CD8-positive, alpha-beta memory T cell (primary cell): ENCODE measurements at regions of chr1 and their contacts with region 1.

Region 1: DNA sequence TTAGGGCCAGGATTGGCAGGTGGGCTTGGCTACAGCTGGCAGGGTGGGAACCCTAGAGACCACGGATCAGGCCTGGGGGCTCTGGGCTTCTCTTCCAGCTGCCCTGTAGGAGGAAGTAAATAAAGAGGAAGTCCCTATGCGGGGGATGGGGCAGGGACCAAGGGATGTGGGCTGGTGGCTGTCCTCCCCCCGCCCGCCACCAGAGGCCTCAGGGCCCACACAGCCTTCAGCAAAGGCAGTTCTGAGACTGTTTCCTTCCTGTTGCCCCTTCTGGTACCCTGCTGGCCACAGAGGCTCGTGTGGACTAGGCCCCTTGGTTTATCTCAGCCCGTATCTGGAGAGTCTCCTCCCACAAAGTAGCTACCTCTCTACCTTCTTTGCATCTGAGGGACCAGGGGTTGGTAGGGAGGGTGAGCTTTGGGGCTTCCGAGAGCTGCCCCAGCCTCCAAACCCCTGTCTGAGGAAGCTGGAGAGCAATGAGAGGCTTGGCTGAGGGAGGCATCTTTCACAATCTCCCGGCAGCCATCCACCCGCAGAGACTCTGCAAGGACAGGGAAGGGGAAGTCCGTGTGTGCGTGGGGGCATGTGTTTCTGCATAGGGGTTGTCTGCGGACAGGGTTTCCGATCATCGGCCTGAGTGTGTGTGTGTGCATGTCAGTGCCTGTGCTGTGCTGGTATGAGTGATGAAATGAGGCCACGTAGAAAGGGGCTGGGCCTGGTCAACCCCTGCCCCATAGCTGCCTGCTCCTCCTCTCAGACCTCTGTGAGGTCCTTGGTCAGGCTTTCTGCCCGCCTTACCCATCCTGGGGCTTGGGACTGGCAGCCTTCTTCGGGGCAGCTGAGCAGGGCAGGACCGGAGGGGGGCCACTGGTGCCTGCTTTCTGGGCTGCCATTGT is 12.5 kb downstream of the RPS6KA1 start:
- DNase-seq: peak; percentile 57 to 85 (median 73)
- H3K4me3 ChIP-seq: peak overlapping the region; percentile 61
- H3K4me3 Mint-ChIP-seq: peak overlapping the region; percentile 60 to 84 (median 81)
- H3K27ac ChIP-seq: peak overlapping the region; percentile 80
- H3K27ac Mint-ChIP-seq: peak overlapping the region; percentile 94 to 98 (median 97)
- H3K4me1 ChIP-seq: peaks cover 88% of the 10 kb centered on the region
- H3K4me1 Mint-ChIP-seq: peaks cover 79 to 92% (median 87%) of the 10 kb centered on the region in 3 donors
- H3K27me3 ChIP-seq: no peaks in the 10 kb centered on the region
- H3K27me3 Mint-ChIP-seq: peaks cover 0 to 1% of the 10 kb centered on the region in 2 donors

Region 2: DNA sequence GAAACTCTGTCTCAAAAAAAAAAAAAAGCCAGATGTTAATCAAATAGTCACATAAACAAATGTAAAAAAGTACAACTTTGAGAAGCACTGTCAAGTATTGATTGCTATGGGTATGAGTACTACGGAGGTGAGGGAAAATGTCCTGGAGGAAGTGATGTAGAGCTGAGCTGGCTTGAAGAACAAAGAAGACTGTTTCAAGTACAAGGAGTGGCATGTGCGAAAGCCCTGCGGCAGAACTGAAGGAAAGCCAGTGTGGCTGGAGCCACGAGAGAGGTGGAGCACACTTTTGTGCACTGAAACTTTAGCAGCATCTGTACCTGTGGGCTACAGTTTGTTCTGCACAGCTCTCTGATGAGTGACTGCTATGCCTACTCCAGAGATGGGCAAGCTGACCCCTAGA is 17.9 kb before region 1 on chr1:
- CTCF ChIA-PET with region 1: interaction called, 54 read pairs
- POLR2A ChIA-PET with region 1: interaction called, 3 read pairs
- DNase-seq: no peak
- H3K4me3 ChIP-seq: no peak overlapping the region
- H3K4me3 Mint-ChIP-seq: peak overlapping the region in 1 of 7 donors; percentile 20
- H3K27ac ChIP-seq: no peak overlapping the region
- H3K27ac Mint-ChIP-seq: peak overlapping the region in 1 of 8 donors; percentile 16
- H3K4me1 ChIP-seq: no peaks in the 10 kb centered on the region
- H3K4me1 Mint-ChIP-seq: peaks cover 2 to 4% (median 3%) of the 10 kb centered on the region in 3 donors
- H3K27me3 ChIP-seq: no peaks in the 10 kb centered on the region
- H3K27me3 Mint-ChIP-seq: peaks cover 8 to 16% of the 10 kb centered on the region in 2 donors

Region 3: DNA sequence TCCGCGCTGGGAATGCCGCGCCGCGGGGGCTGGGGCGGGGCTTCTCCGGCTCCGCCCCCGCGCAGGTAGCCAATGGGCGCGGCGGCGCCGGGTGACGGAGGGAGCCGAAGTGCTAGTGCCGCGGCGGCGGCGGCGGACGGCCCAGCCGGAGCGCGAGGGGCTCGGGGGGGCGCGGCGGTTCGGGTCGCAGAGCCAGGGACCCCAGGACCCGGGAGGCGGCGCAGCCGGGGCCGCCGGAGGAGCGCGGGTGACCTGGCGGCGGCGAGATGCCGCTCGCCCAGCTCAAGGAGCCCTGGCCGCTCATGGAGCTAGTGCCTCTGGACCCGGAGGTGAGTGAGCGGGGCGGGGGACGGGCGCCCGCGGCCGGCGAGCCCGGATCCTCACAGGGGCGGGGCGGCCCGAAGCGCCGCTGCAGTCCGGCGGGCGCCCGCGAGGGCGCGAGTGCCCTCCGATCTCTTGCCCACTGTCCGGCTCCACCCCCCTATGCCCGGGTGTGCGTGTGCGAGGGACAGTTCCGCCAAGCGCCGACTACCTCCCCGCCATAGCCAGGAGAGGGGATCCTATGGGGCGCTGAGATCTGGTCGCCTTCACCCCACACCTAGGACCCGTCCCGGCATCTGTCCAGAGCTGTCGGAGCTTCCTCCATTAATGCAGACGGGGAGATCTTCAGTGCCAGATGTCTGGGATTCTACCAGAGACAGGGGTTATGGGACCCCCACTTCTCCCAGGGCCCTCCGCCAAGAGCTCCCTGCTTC is 12.2 kb before region 1 on chr1 and contains the start of gene RPS6KA1:
- CTCF ChIA-PET with region 1: interaction called, 54 read pairs
- POLR2A ChIA-PET with region 1: interaction called, 8 read pairs
- DNase-seq: peak; percentile 53 to 76 (median 62)
- H3K4me3 ChIP-seq: peak within 1 kb of the TSS; percentile 54
- H3K4me3 Mint-ChIP-seq: peak within 1 kb of the TSS; percentile 85 to 92 (median 90)
- H3K27ac ChIP-seq: peak within 1 kb of the TSS; percentile 51
- H3K27ac Mint-ChIP-seq: peak within 1 kb of the TSS in 7 of 8 donors; percentile 62 to 93 (median 88)
- H3K4me1 ChIP-seq: peaks cover 33% of the 10 kb centered on the region
- H3K4me1 Mint-ChIP-seq: peaks cover 25 to 39% (median 28%) of the 10 kb centered on the region in 3 donors
- H3K27me3 ChIP-seq: no peaks in the 10 kb centered on the region
- H3K27me3 Mint-ChIP-seq: peaks cover under 1 to 2% of the 10 kb centered on the region in 2 donors
- total RNA-seq, gene RPS6KA1: 187 to 189 TPM

Region 4: GRCh38 chr1:26555550-26556510 is 13.8 kb after region 1 on chr1:
- CTCF ChIA-PET with region 1: interaction called, 11 read pairs
- POLR2A ChIA-PET with region 1: no interaction called
- DNase-seq: no peak
- H3K4me3 ChIP-seq: no peak overlapping the region
- H3K4me3 Mint-ChIP-seq: no peak overlapping the region
- H3K27ac ChIP-seq: no peak overlapping the region
- H3K27ac Mint-ChIP-seq: peak overlapping the region in 3 of 8 donors; percentile 54 to 79 (median 64)
- H3K4me1 ChIP-seq: peaks cover 15% of the 10 kb centered on the region
- H3K4me1 Mint-ChIP-seq: peaks cover 7 to 11% (median 10%) of the 10 kb centered on the region in 3 donors
- H3K27me3 ChIP-seq: no peaks in the 10 kb centered on the region
- H3K27me3 Mint-ChIP-seq: no peaks in the 10 kb centered on the region